Sigmoid colon (tissue), 7 donors: ENCODE measurements at regions of chr9 and their contacts with region 1.

Region 1: DNA sequence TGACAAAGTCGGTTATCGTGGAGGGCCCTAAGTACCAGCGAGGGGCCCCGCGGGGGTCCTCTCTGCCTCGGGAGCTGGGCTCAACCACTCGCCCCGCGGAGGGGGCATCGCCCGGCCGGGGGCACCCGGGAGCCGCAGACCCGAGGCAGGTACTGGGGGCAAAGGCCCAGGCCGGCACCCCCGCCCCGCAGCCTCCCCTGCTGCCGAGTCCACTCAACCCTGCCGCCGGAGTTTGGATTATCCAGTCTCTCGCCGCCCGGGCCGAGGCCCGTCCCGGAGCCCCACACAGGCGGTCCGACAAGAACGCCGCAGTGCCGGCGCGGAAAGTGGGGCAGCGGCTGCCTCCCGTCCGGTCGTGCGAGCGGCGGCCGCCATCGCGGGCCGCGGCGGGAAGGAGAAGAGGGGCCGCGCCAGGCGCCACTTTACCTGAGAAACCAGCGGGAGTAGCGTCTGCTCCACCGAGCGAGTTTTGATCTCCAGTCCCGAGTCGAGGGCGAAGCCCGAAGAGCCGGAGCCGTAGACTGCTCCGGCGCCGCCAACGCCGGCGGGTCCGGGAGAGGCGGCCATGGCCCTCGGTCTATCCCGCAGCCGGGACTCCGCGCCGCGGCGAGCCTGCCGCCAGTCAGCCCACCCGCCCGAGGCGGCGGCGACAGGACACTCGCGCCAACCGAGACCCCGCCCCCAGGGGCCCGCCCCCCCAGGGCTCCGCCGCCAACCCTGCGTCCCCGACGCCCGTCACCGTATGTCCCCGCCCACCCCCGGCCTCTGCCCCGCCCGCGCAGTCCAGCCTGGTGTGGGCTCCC is at the start of gene CTNNAL1:
- DNase-seq: peak; percentile 98
- H3K4me3 ChIP-seq: peak within 1 kb of the TSS; percentile 67 to 95 (median 87)
- H3K27ac ChIP-seq: peak within 1 kb of the TSS; percentile 96 to 100 (median 97)
- H3K4me1 ChIP-seq: peaks cover 0 to 46% (median 37%) of the 10 kb centered on the region in 4 donors
- H3K27me3 ChIP-seq: no peaks in the 10 kb centered on the region
- CTCF ChIP-seq: no peak
- EP300 ChIP-seq: no peak
- POLR2A ChIP-seq: peak; percentile 41 to 76
- total RNA-seq, gene CTNNAL1: 36.4 to 56.8 (median 42.6) TPM

Region 2: GRCh38 chr9:109119439-109120203 is 106.5 kb after region 1 on chr9 and contains the start of gene TMEM245:
- intact Hi-C with region 1: loop called (anchors 5 kb)
- DNase-seq: peak; percentile 98
- H3K4me3 ChIP-seq: peak within 1 kb of the TSS; percentile 73 to 97 (median 90)
- H3K27ac ChIP-seq: peak within 1 kb of the TSS; percentile 91 to 98 (median 94)
- H3K4me1 ChIP-seq: peaks cover 0 to 48% (median 46%) of the 10 kb centered on the region in 4 donors
- H3K27me3 ChIP-seq: no peaks in the 10 kb centered on the region
- CTCF ChIP-seq: no peak
- EP300 ChIP-seq: peak in 1 of 4 donors; percentile 7
- POLR2A ChIP-seq: peak; percentile 24 to 41
- total RNA-seq, gene TMEM245: 90.7 to 105 (median 99.5) TPM